Prostate gland (tissue), 2 donors: ENCODE measurements at regions of chr10 and their contacts with region 1.

Region 1: DNA sequence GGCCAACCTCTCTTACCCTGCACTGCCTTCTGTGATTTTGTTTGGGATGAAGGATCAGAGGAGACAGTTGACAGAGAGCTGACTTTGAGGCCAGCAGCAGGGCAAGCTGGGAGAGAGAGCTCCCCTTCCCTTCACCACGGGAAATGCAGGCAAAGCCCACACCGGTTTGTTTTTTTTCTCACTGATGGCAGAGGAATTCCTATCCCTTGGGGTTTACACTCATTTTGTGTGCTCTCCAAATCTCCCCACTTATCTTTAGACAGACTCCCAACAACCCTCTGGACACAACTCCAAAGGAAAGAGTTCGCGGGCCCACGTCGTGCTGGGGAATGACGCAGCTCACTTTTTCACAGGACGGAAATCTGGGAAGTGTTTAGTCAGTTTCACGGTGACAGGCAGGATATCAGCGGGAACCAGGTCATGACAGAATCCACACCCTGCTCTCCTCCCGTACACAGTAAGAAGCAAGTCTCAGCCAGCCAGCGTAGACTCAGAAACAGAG is 68.3 kb upstream of the FAM171A1 start:
- DNase-seq: no peak
- H3K4me3 ChIP-seq: peak overlapping the region; percentile 7 to 8
- H3K27ac ChIP-seq: peak overlapping the region in 1 of 2 donors; percentile 46
- H3K4me1 ChIP-seq: no peaks in the 10 kb centered on the region
- H3K27me3 ChIP-seq: no peaks in the 10 kb centered on the region
- CTCF ChIP-seq: no peak
- POLR2A ChIP-seq: no peak

Region 2: GRCh38 chr10:14967897-14968296 is 471.5 kb before region 1 on chr10:
- intact Hi-C with region 1: no loop called
- DNase-seq: no peak
- H3K4me3 ChIP-seq: no peak overlapping the region
- H3K27ac ChIP-seq: no peak overlapping the region
- H3K4me1 ChIP-seq: no peaks in the 10 kb centered on the region
- H3K27me3 ChIP-seq: no peaks in the 10 kb centered on the region
- CTCF ChIP-seq: no peak
- POLR2A ChIP-seq: no peak

Region 3: DNA sequence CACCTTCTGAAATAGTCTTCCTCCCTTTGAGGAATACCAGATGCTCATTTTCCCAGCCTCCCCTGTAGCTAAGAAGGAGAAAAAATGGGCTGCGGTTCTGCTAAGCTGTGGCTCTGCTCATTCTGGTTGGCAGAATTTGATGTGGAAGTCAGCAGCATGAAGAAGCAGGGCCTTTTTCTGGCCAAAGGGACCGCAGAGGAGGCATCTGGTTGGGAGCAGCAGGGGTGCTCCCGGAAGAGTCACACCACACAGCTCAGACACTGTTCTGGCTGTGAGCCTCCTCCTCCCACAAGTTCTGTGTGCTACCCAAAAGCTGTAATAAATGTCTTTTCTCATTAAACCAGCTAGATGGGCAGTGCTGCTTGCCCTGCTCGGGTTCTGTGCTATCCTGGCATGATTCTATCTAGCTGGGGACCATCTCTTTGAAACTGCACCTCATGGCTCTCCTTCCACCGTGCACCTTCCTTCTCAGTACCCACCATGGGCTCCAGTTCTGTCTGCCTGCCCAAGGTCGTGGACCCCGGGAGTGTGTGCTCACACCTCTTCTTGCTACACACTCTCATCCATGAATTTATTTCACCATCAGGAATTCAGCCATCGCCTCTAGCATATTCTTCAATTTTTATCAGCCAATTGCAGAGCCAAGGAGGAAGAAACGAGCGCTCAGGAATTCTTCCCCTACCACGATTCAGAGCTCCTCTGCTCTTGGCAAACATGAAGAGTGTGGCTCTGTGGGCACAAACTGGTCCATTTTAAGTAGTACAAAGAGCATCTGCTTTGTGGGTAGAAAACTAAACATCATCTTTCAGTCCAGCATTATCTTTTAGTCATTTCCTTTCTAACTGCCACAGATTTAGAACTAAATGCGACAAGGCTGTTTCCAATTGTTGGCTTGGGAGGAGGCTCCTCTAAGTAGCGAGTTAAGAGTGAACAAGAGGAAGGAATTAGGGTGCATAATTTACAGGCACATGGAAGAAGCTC is 145.2 kb before region 1 on chr10:
- intact Hi-C with region 1: no loop called
- DNase-seq: no peak
- H3K4me3 ChIP-seq: no peak overlapping the region
- H3K27ac ChIP-seq: no peak overlapping the region
- H3K4me1 ChIP-seq: no peaks in the 10 kb centered on the region
- H3K27me3 ChIP-seq: no peaks in the 10 kb centered on the region
- CTCF ChIP-seq: no peak
- POLR2A ChIP-seq: no peak

Region 4: GRCh38 chr10:15521328-15521903 is 82.0 kb after region 1 on chr10:
- intact Hi-C with region 1: loop called (anchors 5 kb)
- DNase-seq: no peak
- H3K4me3 ChIP-seq: no peak overlapping the region
- H3K27ac ChIP-seq: no peak overlapping the region
- H3K4me1 ChIP-seq: no peaks in the 10 kb centered on the region
- H3K27me3 ChIP-seq: no peaks in the 10 kb centered on the region
- CTCF ChIP-seq: no peak
- POLR2A ChIP-seq: no peak

Region 5: DNA sequence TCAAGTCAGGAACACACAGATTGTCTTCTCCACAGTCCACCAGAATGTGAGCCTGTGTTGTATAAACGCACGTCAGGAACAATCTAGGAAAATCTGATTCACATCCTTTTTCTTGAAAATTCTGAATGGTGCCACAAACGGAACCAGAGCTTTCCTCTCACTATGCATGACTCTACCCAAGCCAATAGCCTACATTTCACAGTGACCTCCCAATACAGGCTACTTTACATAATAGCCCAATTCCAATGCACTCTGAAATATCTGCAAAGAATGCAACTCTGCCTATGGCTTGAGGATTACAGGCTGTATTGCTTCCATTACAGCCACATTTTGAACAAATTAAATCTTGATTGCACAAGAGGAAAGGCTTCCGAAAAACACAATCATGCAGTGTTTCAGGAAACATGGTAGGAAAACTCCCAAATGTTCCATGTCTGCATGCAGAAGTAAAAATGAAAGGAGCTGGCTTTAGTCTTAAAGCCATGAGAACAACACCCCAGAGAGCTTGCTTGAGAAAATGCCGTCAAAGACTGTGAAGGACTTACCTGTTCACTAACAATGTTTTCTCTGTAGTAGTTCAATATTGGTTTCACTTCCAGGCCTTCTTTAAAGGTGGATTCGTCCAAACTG is 166.5 kb after region 1 on chr10:
- intact Hi-C with region 1: no loop called
- DNase-seq: no peak
- H3K4me3 ChIP-seq: no peak overlapping the region
- H3K27ac ChIP-seq: no peak overlapping the region
- H3K4me1 ChIP-seq: no peaks in the 10 kb centered on the region
- H3K27me3 ChIP-seq: no peaks in the 10 kb centered on the region
- CTCF ChIP-seq: no peak
- POLR2A ChIP-seq: no peak